PC-3 (cell line): ENCODE measurements at regions of chr10 and their contacts with region 1.

Region 1: GRCh38 chr10:79195091-79195923 is 126.5 kb downstream of the ZMIZ1 start:
- DNase-seq: peak; percentile 100
- ATAC-seq: peak; percentile 80
- H3K4me3 ChIP-seq: no peak overlapping the region
- H3K27ac ChIP-seq: no peak overlapping the region
- H3K4me1 ChIP-seq: peaks cover 28% of the 10 kb centered on the region
- H3K27me3 ChIP-seq: no peaks in the 10 kb centered on the region
- CTCF ChIP-seq: peak; percentile 100

Region 2: GRCh38 chr10:78211561-78212051 is 983.7 kb before region 1 on chr10:
- CTCF ChIA-PET with region 1: no interaction called
- POLR2A ChIA-PET with region 1: no interaction called
- intact Hi-C with region 1: loop called (anchors 1 kb)
- DNase-seq: peak; percentile 92
- ATAC-seq: peak; percentile 66
- H3K4me3 ChIP-seq: no peak overlapping the region
- H3K27ac ChIP-seq: no peak overlapping the region
- H3K4me1 ChIP-seq: no peaks in the 10 kb centered on the region
- H3K27me3 ChIP-seq: peaks cover 69% of the 10 kb centered on the region
- CTCF ChIP-seq: peak; percentile 100

Region 3: GRCh38 chr10:78432583-78432982 is 762.7 kb before region 1 on chr10:
- CTCF ChIA-PET with region 1: no interaction called
- POLR2A ChIA-PET with region 1: no interaction called
- intact Hi-C with region 1: loop called (anchors 1 kb)
- DNase-seq: peak; percentile 69
- ATAC-seq: peak; percentile 79
- H3K4me3 ChIP-seq: no peak overlapping the region
- H3K27ac ChIP-seq: no peak overlapping the region
- H3K4me1 ChIP-seq: peaks cover 13% of the 10 kb centered on the region
- H3K27me3 ChIP-seq: peaks cover 39% of the 10 kb centered on the region
- CTCF ChIP-seq: peak; percentile 78

Region 4: DNA sequence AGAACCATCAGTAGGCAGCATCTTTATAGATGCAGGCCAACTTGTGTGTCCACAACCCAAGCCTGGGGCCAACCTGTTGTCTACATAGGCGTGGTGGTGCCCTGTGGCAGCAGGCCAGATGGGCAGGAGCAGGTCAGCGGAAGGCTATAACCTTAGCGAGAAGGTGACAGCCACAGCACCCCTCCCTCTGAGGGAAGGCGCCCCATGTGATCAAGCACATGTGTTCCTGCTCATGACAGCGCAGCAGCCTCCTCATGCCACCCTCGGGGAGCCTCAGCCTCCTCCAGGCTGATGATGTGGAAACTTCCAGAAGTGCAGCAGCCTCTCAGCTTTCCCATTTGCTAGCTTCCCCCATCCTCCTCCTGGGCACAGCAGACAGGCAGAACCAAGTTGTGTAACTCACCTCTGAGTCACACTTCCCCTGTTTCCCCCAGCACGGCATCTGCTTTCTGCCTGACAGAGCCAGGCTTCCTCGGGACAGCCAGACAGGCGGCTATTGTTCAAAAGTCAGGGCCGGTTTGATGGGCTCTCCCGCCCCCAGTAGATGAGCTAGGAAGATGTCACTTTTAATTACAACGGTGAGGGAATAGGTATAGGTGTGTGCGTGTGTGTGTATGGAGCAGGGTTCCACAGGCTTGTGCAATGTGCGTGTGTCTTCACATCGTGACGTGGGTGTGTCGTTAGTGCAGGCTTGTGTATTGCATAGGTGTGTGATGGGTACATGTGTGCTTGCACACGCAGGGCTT is 438.5 kb before region 1 on chr10:
- CTCF ChIA-PET with region 1: interaction called, 3 read pairs
- POLR2A ChIA-PET with region 1: no interaction called
- intact Hi-C with region 1: loop called (anchors 1 kb)
- DNase-seq: peak; percentile 100
- ATAC-seq: peak; percentile 98
- H3K4me3 ChIP-seq: peak overlapping the region; percentile 4; the same call in 1 of the 2 replicates
- H3K27ac ChIP-seq: peak overlapping the region; percentile 73
- H3K4me1 ChIP-seq: peaks cover 28% of the 10 kb centered on the region
- H3K27me3 ChIP-seq: no peaks in the 10 kb centered on the region
- CTCF ChIP-seq: peak; percentile 39; the same call in 1 of the 2 replicates

Region 5: GRCh38 chr10:78964952-78965633 is 230.2 kb before region 1 on chr10:
- CTCF ChIA-PET with region 1: interaction called, 4 read pairs
- POLR2A ChIA-PET with region 1: no interaction called
- intact Hi-C with region 1: loop called (anchors 2 kb)
- DNase-seq: peak; percentile 100
- ATAC-seq: peak; percentile 93
- H3K4me3 ChIP-seq: peak overlapping the region; percentile 2; the same call in 1 of the 2 replicates
- H3K27ac ChIP-seq: peak overlapping the region; percentile 66
- H3K4me1 ChIP-seq: peaks cover 37% of the 10 kb centered on the region
- H3K27me3 ChIP-seq: no peaks in the 10 kb centered on the region
- CTCF ChIP-seq: no peak

Region 6: DNA sequence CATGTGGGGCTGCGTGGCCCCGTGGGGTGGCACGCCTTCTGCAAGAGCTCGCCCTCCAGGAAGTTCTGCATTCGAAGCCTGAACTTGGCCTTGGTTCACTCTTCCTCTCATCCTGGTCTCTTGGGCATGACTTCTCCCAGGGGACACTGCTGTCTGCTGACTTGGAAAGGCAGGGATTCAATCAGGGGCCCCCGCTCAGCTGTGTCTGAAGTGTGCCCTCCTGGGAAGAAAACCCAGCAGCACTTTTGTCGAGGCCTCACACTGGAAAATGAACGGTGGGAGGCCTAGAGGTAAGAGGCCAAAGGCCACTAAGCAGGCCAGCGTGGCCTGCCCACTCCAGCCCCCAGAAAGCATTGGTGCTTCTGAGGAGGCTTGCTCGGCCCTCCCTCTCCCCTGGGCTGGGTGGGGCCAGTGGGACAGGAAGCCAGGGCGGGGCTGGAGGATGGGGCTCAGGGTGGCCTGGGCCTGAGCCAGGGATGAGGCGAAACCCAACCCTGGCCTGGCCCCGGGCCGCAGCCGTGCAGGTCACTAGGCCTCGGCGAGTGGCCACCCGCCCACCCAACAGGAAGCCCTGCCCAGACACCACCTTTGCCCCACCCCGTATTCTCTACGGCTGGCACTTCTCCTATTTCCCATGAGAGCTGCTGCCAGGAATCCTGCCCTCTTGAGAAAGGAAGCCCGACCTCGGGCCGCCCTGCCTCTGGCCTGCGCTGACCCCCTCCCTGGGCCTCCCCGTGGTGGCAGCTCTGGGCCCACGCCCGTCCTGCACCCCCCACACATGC is 45.5 kb before region 1 on chr10:
- CTCF ChIA-PET with region 1: interaction called, 22 read pairs
- POLR2A ChIA-PET with region 1: interaction called, 8 read pairs
- intact Hi-C with region 1: loop called (anchors 1 kb)
- DNase-seq: peak; percentile 100
- ATAC-seq: peak; percentile 62
- H3K4me3 ChIP-seq: peak overlapping the region; percentile 2; the same call in 1 of the 2 replicates
- H3K27ac ChIP-seq: peak overlapping the region; percentile 77
- H3K4me1 ChIP-seq: peaks cover 67% of the 10 kb centered on the region
- H3K27me3 ChIP-seq: no peaks in the 10 kb centered on the region
- CTCF ChIP-seq: no peak